ENCODE measurements at regions of chr20 and their contacts with region 1.

Region 1: GRCh38 chr20:18507218-18508021 is at the start of gene SEC23B:
- DNase-seq: peak; percentile 99 to 100 (median 99)
- H3K4me3 ChIP-seq: peak within 1 kb of the TSS; percentile 71 to 97 (median 89)
- H3K27ac ChIP-seq: peak within 1 kb of the TSS; percentile 99 to 100
- H3K4me1 ChIP-seq: peaks cover 2 to 23% (median 14%) of the 10 kb centered on the region in 4 experiments
- H3K27me3 ChIP-seq: peaks cover 0 to 6% (median 0%) of the 10 kb centered on the region in 5 experiments

Region 2: DNA sequence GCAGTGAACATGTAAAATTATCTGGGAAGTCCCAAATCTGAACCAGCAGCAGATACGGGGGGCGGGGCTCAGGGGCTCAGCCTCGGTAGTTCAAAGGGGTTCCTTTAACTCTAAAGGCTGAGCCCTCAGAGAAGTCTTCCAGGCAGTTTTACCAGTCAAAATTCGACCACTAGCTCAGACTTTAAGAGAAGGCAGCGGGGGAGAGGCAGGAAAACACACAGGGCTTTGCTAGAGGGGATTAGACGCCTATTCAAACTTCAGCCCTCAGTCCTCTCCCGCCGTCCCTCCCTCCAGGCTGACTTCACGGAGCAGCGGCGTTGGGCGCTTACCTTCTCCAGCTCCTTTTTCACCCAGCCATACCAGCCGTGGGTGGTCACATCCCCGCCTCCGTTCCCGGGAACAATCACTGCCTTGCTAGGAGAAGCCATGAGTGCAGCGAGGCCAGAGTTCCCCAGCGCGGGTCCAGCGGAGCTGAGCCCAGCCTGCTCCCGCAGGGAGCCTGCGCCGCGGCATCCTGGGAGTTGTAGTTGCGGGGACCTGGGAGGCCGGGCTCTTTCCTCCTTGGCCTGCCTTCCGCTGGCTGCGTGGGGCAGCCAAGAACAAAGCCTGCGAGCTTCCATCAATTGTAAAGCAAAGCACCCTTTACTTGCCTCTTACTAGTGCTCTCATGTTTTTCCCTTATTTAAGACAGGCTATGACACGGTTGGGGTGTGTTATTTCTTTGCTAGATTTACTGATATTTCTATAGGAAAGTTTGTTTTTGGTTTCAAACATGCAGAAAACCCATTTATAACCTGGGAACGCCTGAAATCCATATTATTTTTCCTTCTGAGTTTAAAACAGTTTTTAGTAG is 10.5 kb before region 1 on chr20 and contains the start of gene RBBP9:
- CTCF ChIA-PET with region 1: interaction called, 25 read pairs
- POLR2A ChIA-PET with region 1: interaction called, 9 read pairs
- DNase-seq: peak; percentile 61 to 76 (median 67)
- H3K4me3 ChIP-seq: peak within 1 kb of the TSS; percentile 90 to 99 (median 98)
- H3K27ac ChIP-seq: peak within 1 kb of the TSS in 1 of 2 experiments; percentile 54
- H3K4me1 ChIP-seq: peaks cover 7 to 15% (median 11%) of the 10 kb centered on the region in 4 experiments
- H3K27me3 ChIP-seq: no peaks in the 10 kb centered on the region

Region 3: GRCh38 chr20:18754030-18754652 is 246.7 kb after region 1 on chr20:
- CTCF ChIA-PET with region 1: no interaction called
- POLR2A ChIA-PET with region 1: no interaction called
- DNase-seq: peak in 2 of 3 donors; percentile 21 to 39
- H3K4me3 ChIP-seq: no peak overlapping the region
- H3K27ac ChIP-seq: no peak overlapping the region
- H3K4me1 ChIP-seq: peaks cover 0 to 10% (median 5%) of the 10 kb centered on the region in 4 experiments
- H3K27me3 ChIP-seq: no peaks in the 10 kb centered on the region

Measured in common myeloid progenitor, CD34-positive (primary cell).